Activated T-helper 1 cell treated with anti-CD3 and anti-CD28 coated beads, Interleukin-12 subunit alpha, Interleukin-12 subunit beta, Interleukin-2, Interleukin-4 antibody, amounts not matched to agents 30 ng/mL and 10 ng/mL and 1 ng/mL, durations not matched to agents 14 hours and 24 hours and 36 hours (primary cell): ENCODE measurements at regions of chrX and their contacts with region 1.

Region 1: GRCh38 chrX:74614093-74614909 is at the start of gene RLIM:
- DNase-seq: peak; percentile 88
- H3K4me3 Mint-ChIP-seq: peak within 1 kb of the TSS; percentile 100
- H3K27ac Mint-ChIP-seq: peak within 1 kb of the TSS; percentile 99
- H3K4me1 Mint-ChIP-seq: peaks cover 7% of the 10 kb centered on the region
- H3K27me3 Mint-ChIP-seq: no peaks in the 10 kb centered on the region
- total RNA-seq, gene RLIM: 30.5 and 31.4 TPM in 2 replicates

Region 2: DNA sequence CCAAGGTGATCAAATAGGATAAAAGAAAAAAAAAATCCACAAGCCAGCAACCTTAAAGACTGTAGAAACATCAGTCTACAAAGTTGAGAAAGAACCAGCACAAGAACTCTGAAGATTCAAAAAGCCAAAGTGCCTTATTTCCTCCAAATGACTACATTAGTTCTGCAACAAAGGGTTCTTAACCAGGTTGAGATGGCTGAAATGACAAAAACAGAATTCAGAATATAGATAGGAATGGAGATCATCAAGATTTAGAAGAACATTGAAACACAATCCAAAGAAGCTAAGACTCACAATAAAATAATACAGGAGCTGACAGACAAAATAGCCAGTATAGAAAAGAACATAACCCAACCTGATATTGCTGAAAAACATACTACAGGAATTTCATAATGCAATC is 466.9 kb before region 1 on chrX:
- intact Hi-C with region 1: no loop called
- DNase-seq: no peak
- H3K4me3 Mint-ChIP-seq: no peak overlapping the region
- H3K27ac Mint-ChIP-seq: no peak overlapping the region
- H3K4me1 Mint-ChIP-seq: no peaks in the 10 kb centered on the region
- H3K27me3 Mint-ChIP-seq: peaks cover 6% of the 10 kb centered on the region

Region 3: GRCh38 chrX:74492720-74493201 is 121.5 kb before region 1 on chrX:
- intact Hi-C with region 1: no loop called
- DNase-seq: no peak
- H3K4me3 Mint-ChIP-seq: no peak overlapping the region
- H3K27ac Mint-ChIP-seq: no peak overlapping the region
- H3K4me1 Mint-ChIP-seq: no peaks in the 10 kb centered on the region
- H3K27me3 Mint-ChIP-seq: no peaks in the 10 kb centered on the region

Region 4: GRCh38 chrX:74536152-74536831 is 78.0 kb before region 1 on chrX:
- intact Hi-C with region 1: loop called (anchors 10 kb)
- DNase-seq: peak; percentile 7
- H3K4me3 Mint-ChIP-seq: peak overlapping the region; percentile 77
- H3K27ac Mint-ChIP-seq: peak overlapping the region; percentile 23
- H3K4me1 Mint-ChIP-seq: peaks cover 37% of the 10 kb centered on the region
- H3K27me3 Mint-ChIP-seq: no peaks in the 10 kb centered on the region

Region 5: GRCh38 chrX:75156021-75156945 is 542.0 kb after region 1 on chrX and contains the start of gene ABCB7:
- intact Hi-C with region 1: loop called (anchors 1 kb)
- DNase-seq: peak; percentile 52
- H3K4me3 Mint-ChIP-seq: peak within 1 kb of the TSS; percentile 100
- H3K27ac Mint-ChIP-seq: peak within 1 kb of the TSS; percentile 98
- H3K4me1 Mint-ChIP-seq: peaks cover 40% of the 10 kb centered on the region
- H3K27me3 Mint-ChIP-seq: no peaks in the 10 kb centered on the region
- total RNA-seq, gene ABCB7: 37.4 and 38.1 TPM in 2 replicates

Region 6: GRCh38 chrX:76148753-76149152 is 1534.5 kb after region 1 on chrX:
- intact Hi-C with region 1: loop called (anchors 5 kb)
- DNase-seq: peak; percentile 39
- H3K4me3 Mint-ChIP-seq: peak overlapping the region; percentile 86
- H3K27ac Mint-ChIP-seq: peak overlapping the region; percentile 99
- H3K4me1 Mint-ChIP-seq: peaks cover 17% of the 10 kb centered on the region
- H3K27me3 Mint-ChIP-seq: no peaks in the 10 kb centered on the region